ENCODE measurements at regions of chr2 and their contacts with region 1.

Region 1: GRCh38 chr2:11477994-11478393 is 12.0 kb upstream of the E2F6 start:
- DNase-seq: peak; percentile 89

Region 2: DNA sequence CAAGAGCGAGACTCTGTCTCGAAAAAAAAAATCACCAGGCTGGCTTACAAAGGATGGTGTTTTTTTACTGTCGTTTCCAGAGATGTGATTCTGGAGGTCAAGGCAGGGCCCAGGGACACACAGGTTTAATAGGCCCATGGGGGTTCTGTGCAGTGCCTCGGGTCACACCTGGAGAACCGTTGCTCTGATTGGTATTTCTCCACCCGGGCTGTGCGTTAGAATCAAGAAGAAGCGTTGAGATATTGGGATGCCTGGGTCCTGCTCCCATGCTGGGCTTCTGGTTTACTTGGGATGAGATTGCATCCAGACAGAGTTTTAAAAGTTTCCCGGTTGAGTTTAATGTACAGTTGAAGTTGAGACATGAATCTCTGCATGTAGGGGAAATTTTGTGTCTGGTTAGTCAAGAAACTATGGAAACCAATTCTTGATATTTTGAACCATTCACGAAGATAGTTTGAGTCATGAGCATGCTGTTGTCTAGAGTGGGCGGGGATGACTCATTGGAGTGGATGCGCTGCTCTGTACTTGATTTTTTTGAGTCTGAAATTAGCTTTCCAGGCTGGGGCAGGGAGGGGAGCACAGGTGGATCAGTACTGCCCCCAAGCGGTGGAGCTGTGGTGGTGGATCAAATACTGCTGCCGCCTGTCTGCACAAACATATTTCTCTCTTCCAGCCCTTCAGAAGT is 106.0 kb after region 1 on chr2:
- intact Hi-C with region 1: loop called (anchors 1 kb)
- DNase-seq: no peak

Region 3: GRCh38 chr2:11669454-11670291 is 191.7 kb after region 1 on chr2 and contains the start of gene NTSR2:
- intact Hi-C with region 1: loop called (anchors 10 kb)
- DNase-seq: no peak
- total RNA-seq, gene NTSR2: not detected

Measured in cardiac septum (tissue), 1 donor.